ENCODE measurements at regions of chr2 and their contacts with region 1.

Region 1: DNA sequence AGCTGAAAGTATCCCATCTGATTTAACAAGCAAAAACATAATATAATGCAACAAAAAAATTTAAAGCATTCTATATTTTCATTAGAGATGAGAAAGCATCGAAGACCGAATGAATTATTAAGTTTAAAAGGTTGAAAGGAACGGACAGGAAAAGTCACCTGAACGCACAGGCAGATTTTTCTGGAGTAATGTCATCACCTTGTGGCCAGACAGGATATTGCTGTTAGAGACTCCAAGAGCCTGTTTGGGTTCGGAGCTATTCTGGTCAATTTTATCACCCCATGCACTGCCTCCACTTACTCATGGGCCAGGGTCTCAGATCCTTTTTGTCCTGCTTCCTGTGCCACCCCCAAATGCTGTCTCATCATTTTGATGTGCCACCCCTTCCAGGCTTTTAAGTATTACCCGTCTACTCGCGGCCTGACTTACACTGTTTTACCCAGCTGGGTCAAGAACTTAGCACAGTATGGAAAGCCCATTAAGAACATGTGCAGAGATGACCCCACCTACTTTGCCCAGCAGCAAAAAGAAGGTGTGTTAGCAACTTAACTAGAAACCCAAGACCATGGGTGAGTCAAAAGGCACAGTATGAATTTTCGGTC is 27.3 kb downstream of the GKN2 start:
- DNase-seq: peak; percentile 37 to 79
- H3K4me3 ChIP-seq: no peak overlapping the region
- H3K27ac ChIP-seq: no peak overlapping the region
- H3K4me1 ChIP-seq: peaks cover under 1 to 22% (median 6%) of the 10 kb centered on the region in 4 donors
- H3K27me3 ChIP-seq: no peaks in the 10 kb centered on the region
- CTCF ChIP-seq: peak in 5 of 7 experiments; percentile 82 to 90 (median 87)
- EP300 ChIP-seq: no peak
- POLR2A ChIP-seq: no peak

Region 2: GRCh38 chr2:68487773-68488355 is 437.5 kb before region 1 on chr2:
- intact Hi-C with region 1: loop called (anchors 10 kb)
- DNase-seq: peak in 1 of 2 donors; percentile 34
- H3K4me3 ChIP-seq: no peak overlapping the region
- H3K27ac ChIP-seq: no peak overlapping the region
- H3K4me1 ChIP-seq: peaks cover 0 to 9% (median 2%) of the 10 kb centered on the region in 4 donors
- H3K27me3 ChIP-seq: no peaks in the 10 kb centered on the region
- CTCF ChIP-seq: peak in 3 of 7 experiments; percentile 18 to 59 (median 41)
- EP300 ChIP-seq: no peak
- POLR2A ChIP-seq: no peak

Region 3: DNA sequence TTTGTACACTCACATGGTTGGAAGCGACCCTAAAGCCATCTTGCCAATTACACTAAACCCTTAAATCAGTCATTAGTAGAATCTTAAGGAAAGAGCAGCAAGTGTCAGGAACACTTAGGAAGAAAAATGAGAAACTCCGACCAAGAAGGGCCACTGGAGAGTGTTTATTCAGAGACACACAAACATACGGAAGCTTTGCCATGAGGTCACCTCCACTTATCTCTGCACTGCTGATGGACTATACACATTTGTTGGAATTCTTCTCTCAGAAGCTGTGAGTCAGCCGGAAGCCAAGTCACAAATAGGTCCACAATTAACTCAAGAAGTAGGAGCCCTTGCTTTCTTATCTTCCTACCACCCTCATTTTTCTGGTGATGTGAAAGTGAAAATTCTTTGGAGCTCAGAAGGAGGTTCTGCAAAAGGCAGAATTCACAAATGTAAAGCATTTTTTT is 75.8 kb before region 1 on chr2:
- intact Hi-C with region 1: no loop called
- DNase-seq: no peak
- H3K4me3 ChIP-seq: no peak overlapping the region
- H3K27ac ChIP-seq: no peak overlapping the region
- H3K4me1 ChIP-seq: no peaks in the 10 kb centered on the region
- H3K27me3 ChIP-seq: no peaks in the 10 kb centered on the region
- CTCF ChIP-seq: no peak
- EP300 ChIP-seq: no peak
- POLR2A ChIP-seq: no peak

Region 4: DNA sequence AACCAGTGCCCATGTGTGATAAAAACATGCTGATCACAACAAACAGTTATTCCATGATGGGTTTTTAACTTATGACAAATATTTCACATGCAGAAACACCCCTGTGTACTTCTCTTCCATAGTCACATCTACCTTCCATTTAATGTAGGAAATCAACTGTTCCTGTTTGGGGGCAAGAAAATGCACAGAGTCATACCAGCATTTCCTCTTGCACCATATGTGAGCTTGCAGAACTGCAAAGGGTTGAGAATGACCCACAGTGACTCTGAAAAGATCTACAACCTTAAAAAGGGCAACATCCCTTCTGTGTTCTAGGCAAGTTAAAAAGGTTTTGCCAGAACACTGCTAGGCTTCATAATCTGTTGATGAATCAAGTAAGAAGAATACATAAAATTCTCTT is 64.1 kb before region 1 on chr2:
- intact Hi-C with region 1: no loop called
- DNase-seq: no peak
- H3K4me3 ChIP-seq: no peak overlapping the region
- H3K27ac ChIP-seq: no peak overlapping the region
- H3K4me1 ChIP-seq: peaks cover 0 to 19% (median 12%) of the 10 kb centered on the region in 4 donors
- H3K27me3 ChIP-seq: no peaks in the 10 kb centered on the region
- CTCF ChIP-seq: no peak
- EP300 ChIP-seq: no peak
- POLR2A ChIP-seq: no peak

Region 5: DNA sequence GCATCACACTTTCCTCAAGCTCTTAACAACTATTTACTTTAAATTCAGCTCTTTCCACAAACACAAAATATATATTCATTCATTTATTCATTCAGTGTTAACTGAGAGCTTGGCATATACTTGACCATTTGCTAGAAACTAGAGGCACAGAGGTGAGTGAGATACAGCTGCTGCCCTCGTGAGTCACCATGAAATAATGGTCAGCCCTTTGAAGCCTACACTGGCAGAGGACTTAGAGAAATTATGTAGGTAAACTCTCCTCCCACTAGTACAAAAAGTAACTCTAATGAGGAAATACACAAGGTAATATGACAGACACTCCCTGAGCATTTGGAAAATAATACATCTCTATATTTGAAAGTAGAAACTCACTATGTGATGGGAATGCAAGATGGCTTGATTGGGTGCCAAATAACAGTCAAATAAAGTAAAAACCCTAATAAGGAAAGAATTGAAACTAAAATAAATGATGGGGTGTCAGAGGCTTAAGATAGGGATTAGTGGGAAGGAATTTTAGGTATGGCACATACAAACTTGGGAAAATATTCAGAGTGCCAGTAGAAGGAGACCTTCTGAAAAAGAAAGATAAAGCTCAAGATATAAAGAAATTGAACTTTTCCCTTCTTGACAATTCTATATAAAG is 148.7 kb after region 1 on chr2:
- intact Hi-C with region 1: no loop called
- DNase-seq: no peak
- H3K4me3 ChIP-seq: no peak overlapping the region
- H3K27ac ChIP-seq: no peak overlapping the region
- H3K4me1 ChIP-seq: peaks cover 0 to 9% (median 0%) of the 10 kb centered on the region in 4 donors
- H3K27me3 ChIP-seq: no peaks in the 10 kb centered on the region
- CTCF ChIP-seq: no peak
- EP300 ChIP-seq: no peak
- POLR2A ChIP-seq: no peak

Region 6: GRCh38 chr2:69298261-69298660 is 372.9 kb after region 1 on chr2:
- intact Hi-C with region 1: no loop called
- DNase-seq: no peak
- H3K4me3 ChIP-seq: no peak overlapping the region
- H3K27ac ChIP-seq: no peak overlapping the region
- H3K4me1 ChIP-seq: no peaks in the 10 kb centered on the region
- H3K27me3 ChIP-seq: no peaks in the 10 kb centered on the region
- CTCF ChIP-seq: no peak
- EP300 ChIP-seq: no peak
- POLR2A ChIP-seq: no peak

Measured in stomach (tissue), 19 donors.